Motor neuron (in vitro differentiated cells): ENCODE measurements at regions of chr17 and their contacts with region 1.

Region 1: GRCh38 chr17:60435244-60436167 is 13.2 kb downstream of the CHCT1 start:
- ATAC-seq: peak; percentile 66 to 86 (median 78)
- H3K4me3 ChIP-seq: no peak overlapping the region
- H3K27ac ChIP-seq: no peak overlapping the region
- H3K4me1 ChIP-seq: no peaks in the 10 kb centered on the region

Region 2: DNA sequence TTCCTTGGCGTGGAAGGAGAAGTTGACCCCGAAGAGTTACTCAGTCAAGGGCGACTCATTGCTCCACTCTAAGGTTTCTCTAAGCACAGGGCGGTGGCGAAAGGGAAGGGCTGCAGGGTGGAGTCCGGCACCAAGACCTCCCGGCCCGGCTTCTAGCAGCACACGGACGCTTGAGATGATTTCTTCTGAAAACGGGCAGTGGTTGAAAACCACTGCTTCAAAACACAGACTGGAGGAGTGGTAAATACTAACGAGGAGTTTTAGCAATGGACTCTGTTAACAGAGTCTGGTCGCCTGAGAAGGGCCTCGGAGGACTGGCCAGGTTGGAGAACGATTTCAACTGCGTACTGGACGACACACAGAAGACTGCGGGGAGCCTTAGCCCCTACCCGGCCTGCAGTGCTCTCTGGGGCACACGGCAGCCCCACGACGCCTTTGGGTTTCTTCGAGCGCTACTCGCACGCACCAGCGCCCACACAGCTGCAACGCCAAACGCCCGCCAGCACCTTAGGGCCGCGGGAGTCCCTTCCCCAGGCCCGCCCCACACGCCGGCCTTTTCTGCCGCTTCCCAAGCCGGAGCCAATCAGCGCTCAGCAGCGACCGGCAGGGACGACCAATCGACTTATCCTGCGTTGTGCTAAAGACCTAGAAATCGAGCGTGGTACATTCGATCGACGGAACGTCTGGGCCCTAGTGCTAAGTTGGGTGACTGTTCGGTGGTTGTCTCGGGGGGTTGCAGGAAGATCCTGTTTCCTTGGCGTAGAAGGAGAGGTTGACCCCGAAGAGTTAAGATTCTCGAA is 300.2 kb before region 1 on chr17:
- in situ Hi-C with region 1: loop called in 5 of 9 experiments (anchors 25 kb)
- ATAC-seq: peak; percentile 90 to 97 (median 94)
- H3K4me3 ChIP-seq: peak overlapping the region; percentile 52 to 84 (median 61)
- H3K27ac ChIP-seq: no peak overlapping the region
- H3K4me1 ChIP-seq: peaks cover 10 to 13% of the 10 kb centered on the region in 2 donors

Region 3: DNA sequence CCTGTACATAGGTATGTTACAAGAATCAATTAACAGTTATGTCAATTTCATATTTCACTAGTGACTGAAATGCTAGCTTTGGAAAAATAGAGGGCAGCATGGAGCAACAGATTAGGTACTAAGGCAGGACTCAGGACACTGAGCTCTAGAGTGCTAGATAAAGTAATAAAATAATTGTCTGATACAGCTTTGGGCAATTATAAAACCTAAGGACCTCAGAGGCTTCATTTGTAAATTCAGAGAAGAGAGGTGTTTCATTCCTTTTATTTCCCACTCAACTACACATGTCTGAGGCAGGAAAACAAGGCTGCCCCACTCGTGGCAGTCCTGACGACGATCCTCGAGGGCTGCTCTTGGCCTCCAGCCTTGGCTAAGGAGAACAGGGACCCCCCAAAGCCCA is 204.3 kb before region 1 on chr17:
- in situ Hi-C with region 1: loop called in 1 of 9 experiments (anchors 25 kb)
- ATAC-seq: peak in 4 of 8 experiments; percentile 45 to 86 (median 78)
- H3K4me3 ChIP-seq: no peak overlapping the region
- H3K27ac ChIP-seq: no peak overlapping the region
- H3K4me1 ChIP-seq: no peaks in the 10 kb centered on the region

Region 4: DNA sequence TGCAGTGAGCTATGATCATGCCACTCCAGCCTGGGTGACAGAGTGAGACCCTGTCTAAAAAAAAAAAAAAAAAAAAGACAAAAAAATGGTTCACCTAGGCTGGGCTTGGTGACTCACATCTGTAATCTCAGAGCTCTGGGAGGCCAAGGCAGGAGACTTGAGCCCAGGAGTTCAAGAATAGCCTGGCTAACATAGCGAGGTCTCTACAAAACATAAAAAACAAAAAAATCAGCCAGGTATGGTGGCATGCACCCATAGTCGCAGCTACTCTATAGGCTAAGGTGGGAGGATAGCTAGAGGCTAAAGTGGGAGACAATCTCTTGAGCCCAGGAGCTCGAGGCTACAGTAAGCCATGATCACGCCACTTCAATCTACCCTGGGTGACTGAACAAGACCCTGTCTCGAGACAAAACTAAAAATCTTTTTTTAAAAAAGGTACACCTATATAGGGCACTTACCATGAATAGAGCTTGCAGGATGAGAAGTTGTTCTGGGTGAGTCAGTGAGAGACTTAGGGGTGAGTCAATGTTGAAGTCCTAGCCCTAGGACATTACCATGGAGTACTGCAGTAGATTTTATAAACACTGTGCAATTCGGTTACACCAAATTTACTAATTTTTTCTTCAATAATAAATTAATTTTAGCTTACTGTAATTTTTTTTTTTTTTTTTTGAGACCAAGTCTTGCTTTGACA is 62.6 kb before region 1 on chr17:
- in situ Hi-C with region 1: no loop called
- ATAC-seq: peak in 5 of 8 experiments; percentile 19 to 95 (median 51)
- H3K4me3 ChIP-seq: no peak overlapping the region
- H3K27ac ChIP-seq: no peak overlapping the region
- H3K4me1 ChIP-seq: no peaks in the 10 kb centered on the region

Region 5: DNA sequence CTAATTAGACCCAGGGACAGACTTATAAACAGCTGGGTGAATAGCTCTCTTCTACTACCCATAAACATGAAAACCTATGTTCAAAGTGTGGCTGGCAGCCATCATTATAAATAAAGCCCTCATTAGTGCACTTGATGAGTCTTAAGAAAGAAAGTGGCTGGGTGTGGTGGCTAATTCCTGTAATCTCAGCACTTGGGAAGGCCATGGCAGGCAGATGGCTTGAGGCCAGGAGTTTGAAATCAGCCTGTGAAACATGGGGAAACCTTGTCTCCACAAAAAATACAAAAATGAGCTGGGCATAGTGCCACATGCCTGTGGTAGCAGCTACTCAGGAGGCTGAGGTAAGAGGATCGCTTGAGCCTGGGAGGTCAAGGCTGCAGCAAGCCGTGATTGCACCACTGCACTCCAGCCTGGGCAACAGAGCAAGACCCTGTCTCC is 118.9 kb after region 1 on chr17:
- in situ Hi-C with region 1: no loop called
- ATAC-seq: peak in 2 of 8 experiments; percentile 80 to 87
- H3K4me3 ChIP-seq: no peak overlapping the region
- H3K27ac ChIP-seq: no peak overlapping the region
- H3K4me1 ChIP-seq: no peaks in the 10 kb centered on the region